ENCODE measurements at regions of chr7 and their contacts with region 1.

Region 1: DNA sequence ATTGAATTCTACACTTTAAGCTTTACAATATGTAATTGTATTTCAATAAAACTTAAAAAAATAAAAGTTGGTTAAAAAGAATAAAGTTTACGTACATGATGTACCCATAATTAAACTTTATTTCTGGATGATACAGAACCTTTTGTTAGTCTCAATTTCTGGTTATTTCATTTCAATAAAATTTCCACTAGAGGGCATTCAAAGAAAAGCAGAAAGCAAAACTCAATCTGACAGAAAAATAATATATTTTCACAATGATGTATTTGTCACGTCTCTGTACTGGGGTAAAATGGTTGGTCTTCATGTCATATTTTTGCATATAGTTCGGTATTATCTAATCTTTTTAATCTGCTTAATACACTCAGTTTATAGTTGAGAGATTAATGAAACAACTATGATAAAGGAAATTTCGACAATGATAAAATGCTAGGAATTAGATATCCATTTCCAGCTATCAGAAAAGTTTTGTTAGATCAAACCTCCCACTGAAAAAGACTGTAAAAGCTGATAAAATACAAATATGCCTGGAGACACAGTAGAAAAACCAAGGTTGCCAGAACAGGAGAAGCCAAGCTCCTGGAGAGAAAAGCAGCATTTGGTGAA is 27.4 kb downstream of the ASZ1 start:
- DNase-seq: no peak
- ATAC-seq: peak; percentile 67
- H3K4me3 ChIP-seq: no peak overlapping the region
- H3K27ac ChIP-seq: no peak overlapping the region
- H3K4me1 ChIP-seq: no peaks in the 10 kb centered on the region
- H3K27me3 ChIP-seq: no peaks in the 10 kb centered on the region
- CTCF ChIP-seq: peak; percentile 11 to 63 (median 35); a peak in 3 of 6 replicates
- EP300 ChIP-seq: no peak
- POLR2A ChIP-seq: no peak
- RAD21 ChIP-seq: peak; percentile 71

Region 2: GRCh38 chr7:117435475-117436043 is 35.6 kb after region 1 on chr7:
- CTCF ChIA-PET with region 1: interaction called, 5 read pairs
- POLR2A ChIA-PET with region 1: no interaction called
- RAD21 ChIA-PET with region 1: interaction called, 15 read pairs
- SMC1A ChIA-PET with region 1: interaction called, 16 read pairs
- in situ Hi-C with region 1: no loop called
- intact Hi-C with region 1: no loop called
- DNase-seq: peak; percentile 73
- ATAC-seq: peak; percentile 99
- H3K4me3 ChIP-seq: no peak overlapping the region
- H3K27ac ChIP-seq: no peak overlapping the region; the same call in 1 of the 2 replicates
- H3K4me1 ChIP-seq: peaks cover 9% of the 10 kb centered on the region
- H3K27me3 ChIP-seq: no peaks in the 10 kb centered on the region
- CTCF ChIP-seq: no peak
- EP300 ChIP-seq: peak; percentile 73 to 81; a peak in 3 of 4 replicates
- POLR2A ChIP-seq: no peak
- RAD21 ChIP-seq: no peak

Region 3: GRCh38 chr7:117479225-117480054 is 79.5 kb after region 1 on chr7 and contains the start of gene CFTR:
- CTCF ChIA-PET with region 1: interaction called, 14 read pairs
- POLR2A ChIA-PET with region 1: no interaction called
- RAD21 ChIA-PET with region 1: interaction called, 5 read pairs
- SMC1A ChIA-PET with region 1: interaction called, 17 read pairs
- in situ Hi-C with region 1: no loop called
- intact Hi-C with region 1: no loop called
- DNase-seq: no peak
- ATAC-seq: peak; percentile 42
- H3K4me3 ChIP-seq: no peak within 1 kb of the TSS
- H3K27ac ChIP-seq: no peak within 1 kb of the TSS
- H3K4me1 ChIP-seq: no peaks in the 10 kb centered on the region
- H3K27me3 ChIP-seq: peaks cover 0 to 6% of the 10 kb centered on the region in 2 experiments; a peak in 2 of 4 replicates
- CTCF ChIP-seq: no peak
- EP300 ChIP-seq: no peak
- POLR2A ChIP-seq: no peak
- RAD21 ChIP-seq: no peak
- polyA plus RNA-seq, gene CFTR: 0.02 TPM in 1 of 2 experiments, not detected in the other

Region 4: DNA sequence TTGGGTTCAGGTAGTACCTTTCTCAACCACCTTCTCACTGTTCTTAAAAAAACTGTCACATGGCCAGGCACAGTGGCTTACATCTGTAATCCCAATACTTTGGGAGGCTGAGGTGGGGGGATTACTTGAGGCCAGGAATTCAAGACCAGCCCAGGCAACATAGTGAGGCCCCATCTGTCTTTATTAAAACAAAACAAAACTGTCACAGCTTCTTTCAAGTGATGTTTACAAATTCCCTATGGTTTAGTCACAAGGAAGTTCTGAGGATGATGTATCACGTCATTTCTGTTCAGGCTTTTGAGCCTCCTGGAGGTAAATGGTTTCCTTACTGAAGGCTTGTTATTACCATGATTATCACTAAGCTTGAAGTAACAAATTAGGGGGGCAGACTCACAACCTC is 266.1 kb after region 1 on chr7:
- CTCF ChIA-PET with region 1: interaction called, 24 read pairs
- POLR2A ChIA-PET with region 1: no interaction called
- RAD21 ChIA-PET with region 1: interaction called, 12 read pairs
- SMC1A ChIA-PET with region 1: interaction called, 4 read pairs
- in situ Hi-C with region 1: no loop called
- intact Hi-C with region 1: no loop called
- DNase-seq: no peak
- ATAC-seq: no peak
- H3K4me3 ChIP-seq: no peak overlapping the region
- H3K27ac ChIP-seq: no peak overlapping the region
- H3K4me1 ChIP-seq: no peaks in the 10 kb centered on the region
- H3K27me3 ChIP-seq: no peaks in the 10 kb centered on the region; a peak in 1 of 4 replicates
- CTCF ChIP-seq: no peak
- EP300 ChIP-seq: no peak
- POLR2A ChIP-seq: no peak
- RAD21 ChIP-seq: no peak

Region 5: DNA sequence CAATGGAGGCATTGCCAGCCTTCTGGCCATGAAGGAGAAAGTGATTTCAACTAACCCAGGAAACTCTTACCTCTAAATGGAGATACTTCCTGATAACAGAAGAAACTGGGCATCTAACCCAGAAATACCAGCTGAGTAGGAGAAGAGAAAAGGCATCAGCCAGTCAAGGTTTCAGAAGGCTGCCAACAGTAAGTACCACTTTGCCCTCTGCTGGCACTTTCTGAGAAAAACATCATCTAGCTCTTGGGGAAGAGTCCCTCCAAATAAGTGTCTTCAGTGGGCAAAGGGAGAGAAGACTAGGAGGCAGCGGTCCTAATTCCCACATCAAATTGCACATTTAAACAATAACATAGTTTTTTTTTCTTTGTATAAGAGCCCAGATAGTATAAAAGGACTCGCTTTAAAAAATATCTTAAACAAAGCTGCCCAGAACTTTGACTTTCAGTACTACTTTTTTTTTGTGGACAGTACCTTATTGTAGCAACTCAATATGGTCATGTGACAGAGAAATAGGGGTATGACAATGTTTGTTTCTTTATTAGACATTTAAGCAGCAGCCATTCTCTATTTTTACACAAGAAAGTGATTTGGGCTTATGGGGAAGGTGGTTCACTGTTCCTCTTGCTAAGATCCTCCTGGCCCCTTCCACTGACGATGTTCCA is 316.0 kb after region 1 on chr7:
- CTCF ChIA-PET with region 1: interaction called, 127 read pairs
- POLR2A ChIA-PET with region 1: no interaction called
- RAD21 ChIA-PET with region 1: interaction called, 89 read pairs
- SMC1A ChIA-PET with region 1: interaction called, 113 read pairs
- in situ Hi-C with region 1: loop called (anchors 5 kb)
- intact Hi-C with region 1: loop called (anchors 1 kb)
- DNase-seq: no peak
- ATAC-seq: peak; percentile 95
- H3K4me3 ChIP-seq: no peak overlapping the region
- H3K27ac ChIP-seq: no peak overlapping the region
- H3K4me1 ChIP-seq: no peaks in the 10 kb centered on the region
- H3K27me3 ChIP-seq: no peaks in the 10 kb centered on the region
- CTCF ChIP-seq: peak; percentile 59 to 74 (median 68)
- EP300 ChIP-seq: no peak
- POLR2A ChIP-seq: no peak
- RAD21 ChIP-seq: peak; percentile 86

Region 6: DNA sequence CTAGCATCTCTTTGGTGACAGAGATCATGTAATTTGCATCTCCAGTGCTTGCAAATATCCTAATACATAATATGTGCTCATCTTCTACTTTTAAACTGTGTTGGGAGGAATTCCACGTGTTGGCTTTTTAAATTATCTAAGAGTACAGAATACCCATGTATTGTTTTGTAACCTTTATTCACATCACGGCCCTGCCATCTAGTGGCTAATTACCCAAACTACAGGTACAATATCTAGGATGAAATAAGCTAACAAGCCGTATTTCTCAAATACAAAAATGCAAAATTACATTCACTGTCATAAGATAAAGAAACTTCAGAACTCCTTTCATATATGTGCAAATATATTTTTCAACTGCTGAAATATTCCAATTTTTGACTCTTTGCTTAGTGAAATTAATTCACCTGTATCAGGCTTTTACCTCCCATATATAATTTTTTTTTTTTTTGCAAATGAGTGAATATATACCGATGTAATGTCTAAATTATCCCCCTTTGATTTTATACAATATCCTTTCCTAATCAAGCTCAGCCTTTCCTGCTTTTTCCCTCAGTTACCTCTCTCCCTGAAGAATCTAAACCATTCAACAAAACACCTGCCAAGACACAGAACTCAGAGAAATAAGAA is 753.7 kb after region 1 on chr7:
- CTCF ChIA-PET with region 1: interaction called, 23 read pairs
- POLR2A ChIA-PET with region 1: no interaction called
- RAD21 ChIA-PET with region 1: interaction called, 15 read pairs
- SMC1A ChIA-PET with region 1: interaction called, 15 read pairs
- in situ Hi-C with region 1: no loop called
- intact Hi-C with region 1: loop called (anchors 5 kb)
- DNase-seq: no peak
- ATAC-seq: peak; percentile 66
- H3K4me3 ChIP-seq: no peak overlapping the region
- H3K27ac ChIP-seq: no peak overlapping the region
- H3K4me1 ChIP-seq: no peaks in the 10 kb centered on the region
- H3K27me3 ChIP-seq: no peaks in the 10 kb centered on the region
- CTCF ChIP-seq: peak; percentile 55 to 68 (median 61); a peak in 5 of 6 replicates
- EP300 ChIP-seq: no peak
- POLR2A ChIP-seq: no peak
- RAD21 ChIP-seq: peak; percentile 72

Measured in GM12878 (cell line).